Adrenal gland (tissue), 19 donors: ENCODE measurements at regions of chr4 and their contacts with region 1.

Region 1: GRCh38 chr4:48830706-48831531 is at the start of gene OCIAD1:
- DNase-seq: peak; percentile 97 to 100 (median 99)
- H3K4me3 ChIP-seq: peak within 1 kb of the TSS; percentile 77 to 98 (median 78)
- H3K27ac ChIP-seq: peak within 1 kb of the TSS; percentile 75 to 96 (median 93)
- H3K4me1 ChIP-seq: peaks cover 7 to 16% of the 10 kb centered on the region in 2 donors
- H3K27me3 ChIP-seq: no peaks in the 10 kb centered on the region
- CTCF ChIP-seq: peak in 1 of 6 experiments; percentile 6
- POLR2A ChIP-seq: peak in 1 of 2 donors; percentile 53
- total RNA-seq, gene OCIAD1: 119 to 200 (median 180) TPM

Region 2: GRCh38 chr4:48499551-48500066 is 331.3 kb before region 1 on chr4:
- intact Hi-C with region 1: no loop called
- DNase-seq: no peak
- H3K4me3 ChIP-seq: no peak overlapping the region
- H3K27ac ChIP-seq: no peak overlapping the region
- H3K4me1 ChIP-seq: no peaks in the 10 kb centered on the region
- H3K27me3 ChIP-seq: no peaks in the 10 kb centered on the region
- CTCF ChIP-seq: no peak
- POLR2A ChIP-seq: no peak

Region 3: DNA sequence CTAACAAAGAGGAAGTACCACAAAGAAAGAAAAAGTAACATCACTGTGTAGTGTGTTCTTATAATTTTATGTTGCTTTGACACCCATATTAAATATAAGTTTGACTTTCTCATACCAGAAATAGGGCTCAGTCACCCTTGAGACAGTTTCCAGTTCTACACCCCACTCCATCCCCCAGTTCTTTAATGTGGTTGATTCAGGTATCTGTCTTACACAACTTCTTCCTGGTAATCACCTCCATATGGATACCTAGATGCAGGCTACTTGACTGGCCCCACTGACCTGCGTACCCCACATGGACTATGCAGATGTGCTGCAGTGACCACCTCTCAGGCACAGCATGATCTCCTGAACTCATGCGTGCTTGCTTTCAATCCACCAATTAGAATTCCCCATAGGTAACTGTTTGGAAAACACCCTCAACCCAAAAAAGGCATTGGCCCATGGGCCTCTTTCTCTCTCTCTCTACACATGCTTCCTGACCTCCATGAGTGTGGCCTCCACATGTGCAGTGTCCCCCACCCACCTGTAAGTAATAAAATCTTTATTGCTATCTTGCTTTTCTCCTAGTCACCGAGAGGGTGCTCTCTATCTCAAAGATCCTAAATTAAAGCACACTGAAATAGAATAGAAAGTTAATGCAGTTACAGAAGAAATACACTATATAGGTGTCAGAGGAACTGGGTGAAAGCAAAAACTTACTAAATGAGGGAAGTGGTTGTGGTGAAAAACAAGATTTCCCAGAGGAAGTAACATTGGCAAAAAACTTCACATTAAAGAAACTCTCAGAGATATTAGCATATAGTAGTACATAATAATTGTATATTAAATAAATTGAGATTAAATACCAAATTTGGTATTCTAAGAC is 242.5 kb before region 1 on chr4:
- intact Hi-C with region 1: loop called in 1 of 2 experiments (anchors 10 kb)
- DNase-seq: no peak
- H3K4me3 ChIP-seq: no peak overlapping the region
- H3K27ac ChIP-seq: no peak overlapping the region
- H3K4me1 ChIP-seq: no peaks in the 10 kb centered on the region
- H3K27me3 ChIP-seq: no peaks in the 10 kb centered on the region
- CTCF ChIP-seq: no peak
- POLR2A ChIP-seq: no peak

Region 4: DNA sequence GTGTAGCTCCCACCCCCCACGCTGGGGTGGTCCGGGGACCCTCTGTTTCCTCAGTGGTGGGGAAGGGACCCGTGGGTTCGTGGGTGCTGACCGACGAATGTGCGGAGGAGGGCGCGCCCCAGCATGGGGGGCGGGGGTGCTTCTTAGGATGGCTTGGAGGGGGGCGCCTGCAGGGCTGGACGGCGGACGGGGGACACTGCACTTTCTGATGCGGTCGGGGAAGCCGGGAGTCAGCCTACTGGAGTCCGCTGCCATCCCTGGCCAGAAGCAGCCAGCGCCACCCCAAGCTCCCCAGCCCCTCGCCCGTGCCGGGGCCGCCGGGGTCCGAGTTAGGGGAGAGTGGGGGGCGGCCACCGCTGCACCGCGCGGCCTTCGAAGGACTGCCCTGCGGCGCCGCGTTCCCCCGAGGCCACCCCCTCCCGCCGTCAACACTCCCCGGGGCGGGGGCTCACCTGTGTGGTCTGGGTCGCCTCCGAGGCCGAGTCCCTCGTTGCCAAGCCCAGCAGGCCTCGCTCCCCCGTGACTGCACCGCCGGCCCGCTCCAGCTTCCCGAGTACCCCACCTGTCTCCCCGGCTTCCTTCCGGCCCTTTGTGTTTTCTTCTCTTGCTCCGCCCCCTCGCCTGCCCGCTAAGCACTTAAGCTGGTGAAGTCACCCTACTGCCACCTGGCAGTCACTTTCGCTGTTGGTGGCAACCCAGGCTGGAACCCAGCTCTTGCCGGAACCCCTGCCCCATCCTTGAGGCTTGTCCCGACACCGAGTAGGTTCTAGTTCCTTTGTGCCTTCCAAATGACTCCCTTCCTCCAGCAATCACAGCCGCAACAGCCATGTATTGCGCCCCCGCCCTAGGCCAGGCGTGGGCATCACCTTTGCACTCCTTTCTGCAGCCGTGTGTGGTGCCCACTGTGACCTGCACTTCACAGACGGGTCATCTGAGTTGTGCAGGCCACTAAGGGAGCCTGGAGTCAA is 75.6 kb after region 1 on chr4 and contains the start of gene OCIAD2:
- intact Hi-C with region 1: loop called in 1 of 2 experiments (anchors 10 kb)
- DNase-seq: peak; percentile 68 to 88 (median 78)
- H3K4me3 ChIP-seq: peak within 1 kb of the TSS in 3 of 4 donors; percentile 14 to 89 (median 83)
- H3K27ac ChIP-seq: peak within 1 kb of the TSS in 3 of 5 donors; percentile 21 to 73 (median 33)
- H3K4me1 ChIP-seq: peaks cover 3 to 18% of the 10 kb centered on the region in 2 donors
- H3K27me3 ChIP-seq: no peaks in the 10 kb centered on the region
- CTCF ChIP-seq: peak in 1 of 6 experiments; percentile 20
- POLR2A ChIP-seq: peak; percentile 45 to 69
- total RNA-seq, gene OCIAD2: 11.1 to 42.5 (median 26.1) TPM